A549 (cell line): ENCODE measurements at regions of chr15 and their contacts with region 1.

Region 1: GRCh38 chr15:52057996-52058395 is 39.0 kb downstream of the MAPK6 start:
- DNase-seq: no peak
- ATAC-seq: no peak
- H3K4me3 ChIP-seq: no peak overlapping the region
- H3K27ac ChIP-seq: no peak overlapping the region
- H3K4me1 ChIP-seq: peaks cover 20% of the 10 kb centered on the region
- CTCF ChIP-seq: no peak
- EP300 ChIP-seq: no peak
- POLR2A ChIP-seq: no peak
- RAD21 ChIP-seq: no peak

Region 2: DNA sequence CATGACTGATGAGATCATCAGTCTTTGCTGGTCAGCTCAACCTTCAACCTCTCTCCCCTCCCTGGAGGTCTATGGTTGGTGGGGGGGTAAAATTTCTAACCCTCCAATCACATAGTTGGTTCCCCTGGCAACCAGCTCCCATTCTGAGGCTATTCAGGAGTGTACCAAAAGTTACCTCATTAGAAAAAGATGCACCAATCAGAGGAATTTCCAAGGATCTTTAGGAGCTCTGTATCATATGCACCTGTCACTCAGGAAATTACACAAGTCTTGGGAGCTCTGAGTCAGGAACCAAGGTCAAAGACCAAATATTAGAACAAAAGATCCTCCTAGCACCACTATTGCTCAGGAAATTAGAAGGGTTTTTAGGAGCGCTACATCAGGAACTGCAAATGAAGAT is 65.0 kb before region 1 on chr15:
- CTCF ChIA-PET with region 1: no interaction called
- POLR2A ChIA-PET with region 1: no interaction called
- DNase-seq: peak in 1 of 2 experiments; percentile 47
- ATAC-seq: peak; percentile 58 to 59; a peak in 5 of 6 replicates
- H3K4me3 ChIP-seq: no peak overlapping the region
- H3K27ac ChIP-seq: peak overlapping the region in 1 of 2 experiments; percentile 2; a peak in 1 of 6 replicates
- H3K4me1 ChIP-seq: peaks cover 37% of the 10 kb centered on the region
- CTCF ChIP-seq: no peak
- EP300 ChIP-seq: no peak
- POLR2A ChIP-seq: no peak
- RAD21 ChIP-seq: no peak

Region 3: GRCh38 chr15:52071546-52071945 is 13.6 kb after region 1 on chr15:
- CTCF ChIA-PET with region 1: interaction called, 16 read pairs
- POLR2A ChIA-PET with region 1: no interaction called
- DNase-seq: no peak
- ATAC-seq: no peak
- H3K4me3 ChIP-seq: no peak overlapping the region
- H3K27ac ChIP-seq: peak overlapping the region in 1 of 2 experiments; percentile 9; a peak in 1 of 6 replicates
- H3K4me1 ChIP-seq: peaks cover 17% of the 10 kb centered on the region
- CTCF ChIP-seq: no peak
- EP300 ChIP-seq: no peak
- POLR2A ChIP-seq: no peak
- RAD21 ChIP-seq: no peak

Region 4: GRCh38 chr15:52179278-52180195 is 121.5 kb after region 1 on chr15:
- CTCF ChIA-PET with region 1: no interaction called
- POLR2A ChIA-PET with region 1: no interaction called
- DNase-seq: peak; percentile 90 to 98
- ATAC-seq: peak; percentile 90 to 92
- H3K4me3 ChIP-seq: peak overlapping the region; percentile 68
- H3K27ac ChIP-seq: peak overlapping the region; percentile 92 to 97
- H3K4me1 ChIP-seq: peaks cover 12% of the 10 kb centered on the region
- CTCF ChIP-seq: peak; percentile 15; the same call in 1 of the 3 replicates
- EP300 ChIP-seq: no peak
- POLR2A ChIP-seq: peak; percentile 90
- RAD21 ChIP-seq: no peak; a peak in 1 of 5 replicates